Activated naive CD4-positive, alpha-beta T cell treated with anti-CD3 and anti-CD28 coated beads for 36 hours (primary cell): ENCODE measurements at regions of chr5 and their contacts with region 1.

Region 1: GRCh38 chr5:95760273-95761191 is 29.4 kb downstream of the RHOBTB3 start:
- DNase-seq: peak; percentile 48
- H3K4me3 Mint-ChIP-seq: peak overlapping the region; percentile 36
- H3K27ac Mint-ChIP-seq: peak overlapping the region; percentile 47
- H3K4me1 Mint-ChIP-seq: peaks cover 26% of the 10 kb centered on the region
- H3K27me3 Mint-ChIP-seq: no peaks in the 10 kb centered on the region

Region 2: GRCh38 chr5:94908889-94909480 is 851.5 kb before region 1 on chr5:
- CTCF ChIA-PET with region 1: no interaction called
- intact Hi-C with region 1: no loop called
- DNase-seq: peak; percentile 26
- H3K4me3 Mint-ChIP-seq: no peak overlapping the region
- H3K27ac Mint-ChIP-seq: no peak overlapping the region
- H3K4me1 Mint-ChIP-seq: no peaks in the 10 kb centered on the region
- H3K27me3 Mint-ChIP-seq: no peaks in the 10 kb centered on the region

Region 3: GRCh38 chr5:95508550-95508949 is 252.0 kb before region 1 on chr5:
- CTCF ChIA-PET with region 1: no interaction called
- intact Hi-C with region 1: no loop called
- DNase-seq: no peak
- H3K4me3 Mint-ChIP-seq: no peak overlapping the region
- H3K27ac Mint-ChIP-seq: no peak overlapping the region
- H3K4me1 Mint-ChIP-seq: no peaks in the 10 kb centered on the region
- H3K27me3 Mint-ChIP-seq: no peaks in the 10 kb centered on the region

Region 4: DNA sequence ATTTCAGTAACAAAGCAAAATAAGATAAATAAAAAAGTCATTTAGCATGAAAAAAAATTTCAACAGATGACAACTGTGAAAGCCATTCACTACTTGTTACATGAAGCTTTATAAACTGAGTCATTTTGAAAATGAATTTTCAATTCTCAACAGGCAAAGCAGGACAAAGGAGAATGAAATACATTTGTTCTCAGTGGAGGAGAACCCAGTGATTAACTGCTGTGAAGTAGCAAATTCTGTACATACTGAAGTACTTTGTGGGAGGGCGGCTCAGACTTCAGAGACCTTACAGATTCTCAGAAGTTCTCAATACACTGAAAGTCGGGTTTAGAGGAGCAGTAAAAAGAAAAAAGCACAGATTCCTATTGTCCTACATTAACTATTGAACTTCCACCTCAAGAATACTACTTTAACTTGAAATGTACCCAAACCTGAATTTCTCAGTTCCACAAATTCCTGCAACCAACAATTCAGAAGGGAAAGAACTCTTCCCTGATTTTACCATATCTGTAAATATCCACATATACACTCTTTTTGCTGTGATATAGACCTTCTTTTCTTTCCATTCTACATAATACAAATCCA is 227.3 kb before region 1 on chr5:
- CTCF ChIA-PET with region 1: no interaction called
- intact Hi-C with region 1: no loop called
- DNase-seq: no peak
- H3K4me3 Mint-ChIP-seq: no peak overlapping the region
- H3K27ac Mint-ChIP-seq: peak overlapping the region; percentile 3
- H3K4me1 Mint-ChIP-seq: peaks cover 22% of the 10 kb centered on the region
- H3K27me3 Mint-ChIP-seq: no peaks in the 10 kb centered on the region

Region 5: GRCh38 chr5:95554647-95555548 is 205.6 kb before region 1 on chr5 and contains the starts of genes ARSK and SKIC3:
- CTCF ChIA-PET with region 1: no interaction called
- intact Hi-C with region 1: loop called (anchors 5 kb)
- DNase-seq: peak; percentile 92
- H3K4me3 Mint-ChIP-seq: peak within 1 kb of the TSS; percentile 87
- H3K27ac Mint-ChIP-seq: peak within 1 kb of the TSS; percentile 93
- H3K4me1 Mint-ChIP-seq: peaks cover 45% of the 10 kb centered on the region
- H3K27me3 Mint-ChIP-seq: no peaks in the 10 kb centered on the region
- total RNA-seq, gene ARSK: 4.5 to 5.1 TPM
- total RNA-seq, gene SKIC3: 67.4 to 69.5 TPM

Region 6: GRCh38 chr5:95664204-95664786 is 96.2 kb before region 1 on chr5:
- CTCF ChIA-PET with region 1: interaction called, 7 read pairs
- intact Hi-C with region 1: loop called (anchors 1 kb)
- DNase-seq: peak; percentile 63
- H3K4me3 Mint-ChIP-seq: no peak overlapping the region
- H3K27ac Mint-ChIP-seq: no peak overlapping the region
- H3K4me1 Mint-ChIP-seq: no peaks in the 10 kb centered on the region
- H3K27me3 Mint-ChIP-seq: no peaks in the 10 kb centered on the region

Region 7: GRCh38 chr5:95718203-95718602 is 42.3 kb before region 1 on chr5:
- CTCF ChIA-PET with region 1: interaction called, 5 read pairs
- intact Hi-C with region 1: loop called (anchors 1 kb)
- DNase-seq: peak; percentile 60
- H3K4me3 Mint-ChIP-seq: no peak overlapping the region
- H3K27ac Mint-ChIP-seq: no peak overlapping the region
- H3K4me1 Mint-ChIP-seq: peaks cover 22% of the 10 kb centered on the region
- H3K27me3 Mint-ChIP-seq: peaks cover 11% of the 10 kb centered on the region

Region 8: DNA sequence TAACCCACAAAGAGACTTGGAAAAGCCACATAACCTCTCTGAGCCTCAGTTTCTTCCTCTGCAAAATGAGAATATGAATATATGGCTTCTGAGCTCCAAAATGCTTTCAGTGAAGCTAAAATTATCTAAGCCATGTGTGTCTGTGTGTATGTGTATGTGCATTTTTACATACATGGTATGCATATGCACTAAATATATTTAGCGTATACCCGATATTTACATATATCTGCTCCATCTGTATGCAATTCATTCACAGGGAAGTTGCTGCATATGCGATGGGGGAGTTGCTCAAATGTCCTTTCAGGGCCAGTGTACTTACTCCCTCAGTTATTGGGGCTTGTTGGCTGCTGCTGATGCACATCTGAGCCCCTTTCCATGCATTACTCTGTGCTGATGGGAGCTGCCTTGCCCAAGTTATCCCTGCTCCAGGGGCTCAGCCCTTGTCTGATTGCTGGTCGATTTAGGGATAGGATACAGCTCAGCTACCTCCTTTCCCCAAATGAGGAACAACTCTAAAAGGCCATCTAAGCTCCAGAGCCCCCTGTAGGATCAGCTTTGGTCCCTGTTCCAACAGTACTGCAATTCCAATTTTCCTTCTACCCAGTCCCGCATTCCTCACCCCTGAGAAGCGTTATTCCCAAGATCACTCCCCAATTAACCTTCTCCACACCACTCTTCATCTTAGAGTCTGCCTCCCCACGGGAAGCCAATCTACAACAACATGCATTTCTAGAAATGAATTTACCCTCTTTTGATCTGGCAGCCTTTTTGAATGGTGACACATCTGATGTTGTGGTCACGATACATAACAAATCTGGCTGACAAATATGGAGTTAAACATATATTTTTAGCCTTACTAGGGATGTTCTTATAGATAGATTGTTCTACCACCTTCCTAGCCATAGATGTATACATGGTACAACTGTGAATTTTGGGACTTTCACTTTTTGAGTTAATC is 13.5 kb before region 1 on chr5:
- CTCF ChIA-PET with region 1: no interaction called
- intact Hi-C with region 1: loop called (anchors 1 kb)
- DNase-seq: no peak
- H3K4me3 Mint-ChIP-seq: no peak overlapping the region
- H3K27ac Mint-ChIP-seq: no peak overlapping the region
- H3K4me1 Mint-ChIP-seq: peaks cover 8% of the 10 kb centered on the region
- H3K27me3 Mint-ChIP-seq: no peaks in the 10 kb centered on the region

Region 9: GRCh38 chr5:95822542-95823181 is 62.1 kb after region 1 on chr5 and contains the start of gene GLRX:
- CTCF ChIA-PET with region 1: no interaction called
- intact Hi-C with region 1: loop called (anchors 2 kb)
- DNase-seq: peak; percentile 64
- H3K4me3 Mint-ChIP-seq: peak within 1 kb of the TSS; percentile 96
- H3K27ac Mint-ChIP-seq: peak within 1 kb of the TSS; percentile 98
- H3K4me1 Mint-ChIP-seq: peaks cover 61% of the 10 kb centered on the region
- H3K27me3 Mint-ChIP-seq: no peaks in the 10 kb centered on the region
- total RNA-seq, gene GLRX: 50.4 to 51.1 TPM

Region 10: GRCh38 chr5:95846554-95847260 is 86.2 kb after region 1 on chr5:
- CTCF ChIA-PET with region 1: interaction called, 4 read pairs
- intact Hi-C with region 1: loop called (anchors 1 kb)
- DNase-seq: peak; percentile 81
- H3K4me3 Mint-ChIP-seq: no peak overlapping the region
- H3K27ac Mint-ChIP-seq: no peak overlapping the region
- H3K4me1 Mint-ChIP-seq: peaks cover 9% of the 10 kb centered on the region
- H3K27me3 Mint-ChIP-seq: no peaks in the 10 kb centered on the region